CD8-positive, alpha-beta T cell (primary cell): ENCODE measurements at regions of chr5 and their contacts with region 1.

Region 1: DNA sequence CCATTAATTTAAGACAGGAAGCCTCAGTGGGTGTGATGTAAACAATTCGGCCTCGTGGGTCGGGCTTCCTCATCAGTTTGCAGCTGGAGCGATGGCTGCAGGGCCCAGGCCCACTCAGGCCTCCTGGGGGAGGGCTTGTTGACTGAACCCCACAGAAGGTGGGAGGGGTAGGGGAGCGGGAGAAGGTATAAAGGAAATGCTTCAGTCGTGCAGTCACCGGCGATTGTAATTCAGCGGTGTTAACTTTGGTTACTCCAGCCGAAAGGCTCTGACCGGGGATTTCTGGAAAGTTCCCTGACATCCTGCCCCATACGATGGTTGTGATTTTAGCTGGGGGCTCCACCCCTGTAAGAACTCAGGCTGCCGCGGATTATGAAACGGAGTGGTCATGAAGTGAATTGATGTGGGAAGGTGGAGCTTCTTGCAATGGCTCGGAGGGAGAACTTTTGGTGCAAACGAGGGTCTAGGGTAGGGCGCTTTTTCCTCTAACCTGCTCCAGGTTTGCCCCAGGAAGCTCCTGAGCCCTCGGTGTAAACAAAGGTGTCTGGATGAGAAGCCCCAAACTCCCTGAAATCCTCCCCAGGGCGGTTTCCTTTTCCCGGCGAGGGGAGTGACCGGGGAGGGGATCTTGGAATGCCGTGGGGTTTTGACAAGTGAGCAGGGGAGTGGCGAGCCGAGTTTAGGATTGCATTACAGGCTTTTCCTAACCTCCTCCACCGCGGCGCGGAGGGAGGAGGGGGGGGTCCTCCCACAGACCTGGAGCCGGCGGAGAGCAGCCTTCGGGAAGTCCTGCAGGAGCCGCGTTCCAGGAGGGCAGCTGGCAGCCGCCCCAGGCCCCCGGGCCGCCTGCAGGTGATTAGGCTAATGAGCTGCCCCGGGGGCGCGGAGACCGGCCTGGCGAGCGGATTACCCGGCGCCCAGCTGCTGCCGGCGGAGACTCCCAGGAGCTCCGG is 215.5 kb downstream of the PDZD2 start:
- DNase-seq: peak in 3 of 9 experiments; percentile 7 to 50 (median 31)
- ATAC-seq: peak; percentile 40
- H3K4me3 ChIP-seq: peak overlapping the region; percentile 41 to 63
- H3K4me3 Mint-ChIP-seq: peak overlapping the region; percentile 80
- H3K27ac ChIP-seq: no peak overlapping the region
- H3K27ac Mint-ChIP-seq: peak overlapping the region; percentile 57
- H3K4me1 ChIP-seq: peaks cover 15% of the 10 kb centered on the region
- H3K4me1 Mint-ChIP-seq: peaks cover 27% of the 10 kb centered on the region
- H3K27me3 ChIP-seq: no peaks in the 10 kb centered on the region
- H3K27me3 Mint-ChIP-seq: peaks cover 21% of the 10 kb centered on the region
- CTCF ChIP-seq: no peak

Region 2: GRCh38 chr5:31408814-31409213 is 445.6 kb before region 1 on chr5:
- CTCF ChIA-PET with region 1: no interaction called
- POLR2A ChIA-PET with region 1: no interaction called
- intact Hi-C with region 1: no loop called
- DNase-seq: no peak
- ATAC-seq: no peak
- H3K4me3 ChIP-seq: no peak overlapping the region
- H3K4me3 Mint-ChIP-seq: no peak overlapping the region
- H3K27ac ChIP-seq: no peak overlapping the region
- H3K27ac Mint-ChIP-seq: no peak overlapping the region
- H3K4me1 ChIP-seq: no peaks in the 10 kb centered on the region
- H3K4me1 Mint-ChIP-seq: no peaks in the 10 kb centered on the region
- H3K27me3 ChIP-seq: no peaks in the 10 kb centered on the region
- H3K27me3 Mint-ChIP-seq: no peaks in the 10 kb centered on the region
- CTCF ChIP-seq: no peak

Region 3: DNA sequence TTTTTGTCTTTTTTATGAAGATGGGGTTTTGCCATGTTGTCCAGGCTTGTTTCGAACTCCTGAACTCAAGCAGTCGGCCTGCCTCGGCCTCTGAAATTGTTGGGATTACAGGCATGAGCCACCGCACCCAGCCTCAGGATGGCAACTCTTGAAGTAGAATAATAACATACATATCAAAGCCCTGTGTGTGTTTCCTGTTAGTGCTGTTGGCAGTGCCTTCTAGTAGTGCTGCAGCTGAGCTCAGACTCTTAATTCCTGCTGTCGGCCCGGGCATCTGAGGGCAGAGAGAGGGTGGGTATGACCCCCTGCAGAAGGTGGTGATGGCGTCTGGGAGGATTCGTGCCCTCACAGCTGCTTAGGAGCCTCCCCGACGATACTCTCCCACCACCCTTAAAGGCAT is 11.7 kb after region 1 on chr5:
- CTCF ChIA-PET with region 1: interaction called, 5 read pairs
- POLR2A ChIA-PET with region 1: interaction called, 24 read pairs
- intact Hi-C with region 1: loop called in 1 of 2 experiments (anchors 1 kb)
- DNase-seq: peak in 3 of 9 experiments; percentile 13 to 60 (median 44)
- ATAC-seq: peak; percentile 42
- H3K4me3 ChIP-seq: peak overlapping the region in 1 of 2 experiments; percentile 20
- H3K4me3 Mint-ChIP-seq: peak overlapping the region; percentile 79
- H3K27ac ChIP-seq: no peak overlapping the region
- H3K27ac Mint-ChIP-seq: peak overlapping the region; percentile 90
- H3K4me1 ChIP-seq: peaks cover 45% of the 10 kb centered on the region
- H3K4me1 Mint-ChIP-seq: peaks cover 51% of the 10 kb centered on the region
- H3K27me3 ChIP-seq: no peaks in the 10 kb centered on the region
- H3K27me3 Mint-ChIP-seq: peaks cover 2% of the 10 kb centered on the region
- CTCF ChIP-seq: no peak

Region 4: GRCh38 chr5:32092938-32093812 is 238.7 kb after region 1 on chr5:
- CTCF ChIA-PET with region 1: interaction called, 6 read pairs
- POLR2A ChIA-PET with region 1: interaction called, 3 read pairs
- intact Hi-C with region 1: loop called in 1 of 2 experiments (anchors 1 kb)
- DNase-seq: peak; percentile 25 to 77 (median 65)
- ATAC-seq: peak; percentile 87
- H3K4me3 ChIP-seq: no peak overlapping the region
- H3K4me3 Mint-ChIP-seq: no peak overlapping the region
- H3K27ac ChIP-seq: no peak overlapping the region
- H3K27ac Mint-ChIP-seq: no peak overlapping the region
- H3K4me1 ChIP-seq: no peaks in the 10 kb centered on the region
- H3K4me1 Mint-ChIP-seq: peaks cover 6% of the 10 kb centered on the region
- H3K27me3 ChIP-seq: no peaks in the 10 kb centered on the region
- H3K27me3 Mint-ChIP-seq: no peaks in the 10 kb centered on the region
- CTCF ChIP-seq: peak; percentile 68